Gastrocnemius medialis (tissue), 4 donors: ENCODE measurements at regions of chr22 and their contacts with region 1.

Region 1: GRCh38 chr22:28899199-28899853 is 16.0 kb downstream of the ZNRF3 start:
- DNase-seq: no peak
- ATAC-seq: no peak
- H3K4me3 ChIP-seq: no peak overlapping the region
- H3K27ac ChIP-seq: no peak overlapping the region
- H3K4me1 ChIP-seq: peaks cover 13 to 26% of the 10 kb centered on the region in 2 donors
- H3K27me3 ChIP-seq: no peaks in the 10 kb centered on the region
- CTCF ChIP-seq: no peak
- POLR2A ChIP-seq: no peak

Region 2: GRCh38 chr22:28750471-28750881 is 148.8 kb before region 1 on chr22:
- in situ Hi-C with region 1: no loop called
- intact Hi-C with region 1: no loop called
- DNase-seq: no peak
- ATAC-seq: no peak
- H3K4me3 ChIP-seq: no peak overlapping the region
- H3K27ac ChIP-seq: no peak overlapping the region
- H3K4me1 ChIP-seq: no peaks in the 10 kb centered on the region
- H3K27me3 ChIP-seq: no peaks in the 10 kb centered on the region
- CTCF ChIP-seq: no peak
- POLR2A ChIP-seq: no peak

Region 3: GRCh38 chr22:28951969-28952521 is 52.7 kb after region 1 on chr22:
- in situ Hi-C with region 1: no loop called
- intact Hi-C with region 1: loop called (anchors 10 kb)
- DNase-seq: no peak
- ATAC-seq: peak; percentile 63 to 66
- H3K4me3 ChIP-seq: no peak overlapping the region
- H3K27ac ChIP-seq: peak overlapping the region; percentile 13 to 65 (median 22)
- H3K4me1 ChIP-seq: peaks cover 50 to 54% of the 10 kb centered on the region in 2 donors
- H3K27me3 ChIP-seq: no peaks in the 10 kb centered on the region
- CTCF ChIP-seq: peak in 2 of 5 experiments; percentile 11 to 27
- POLR2A ChIP-seq: no peak